HEK293T (cell line): ENCODE measurements at regions of chr12 and their contacts with region 1.

Region 1: DNA sequence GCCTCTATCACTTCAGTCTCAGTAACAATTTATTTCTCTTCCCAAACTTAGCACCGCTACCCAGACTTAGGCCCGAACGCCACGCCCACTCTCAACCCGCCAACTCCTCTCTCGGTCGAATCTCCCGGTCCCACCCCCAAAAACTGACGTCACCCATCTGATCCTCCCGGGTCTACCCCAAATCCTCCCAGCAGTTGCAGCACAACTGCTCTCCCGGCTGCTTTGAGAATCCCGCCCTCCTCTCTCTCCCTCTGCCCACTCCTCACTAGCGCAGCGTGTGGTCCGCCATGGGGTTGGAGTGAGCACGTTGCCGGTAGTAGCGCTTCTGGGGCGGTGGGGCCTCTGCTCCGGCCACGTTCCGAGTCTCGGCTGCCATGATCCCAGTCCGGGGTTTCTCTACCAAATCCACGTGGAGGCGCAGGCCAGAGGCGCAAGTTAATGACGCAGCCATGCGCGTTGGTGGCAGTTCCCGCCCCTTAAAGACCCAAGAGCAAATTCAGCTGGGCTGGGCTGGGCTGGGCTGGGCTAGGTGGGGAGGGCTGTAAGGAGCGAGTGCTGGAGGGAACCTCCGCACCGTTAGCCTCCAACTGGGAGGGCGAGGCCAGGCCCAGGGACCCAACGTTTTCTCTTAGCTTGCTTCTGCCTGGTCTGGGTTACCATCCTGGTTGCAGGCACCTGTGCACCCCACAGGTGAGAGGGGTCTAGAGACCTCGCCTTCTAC is at the start of gene METTL1:
- DNase-seq: peak; percentile 90

Region 2: GRCh38 chr12:57661376-57661775 is 110.5 kb before region 1 on chr12:
- CTCF ChIA-PET with region 1: no interaction called
- POLR2A ChIA-PET with region 1: no interaction called
- DNase-seq: no peak

Region 3: GRCh38 chr12:57751788-57752667 is 19.8 kb before region 1 on chr12 and contains the start of gene CDK4:
- CTCF ChIA-PET with region 1: interaction called, 17 read pairs
- POLR2A ChIA-PET with region 1: interaction called, 14 read pairs
- DNase-seq: peak; percentile 96

Region 4: GRCh38 chr12:57759360-57759980 is 12.4 kb before region 1 on chr12:
- CTCF ChIA-PET with region 1: interaction called, 17 read pairs
- POLR2A ChIA-PET with region 1: interaction called, 17 read pairs
- DNase-seq: no peak

Region 5: GRCh38 chr12:57782608-57783465 is 11.0 kb after region 1 on chr12 and contains the start of gene TSFM:
- CTCF ChIA-PET with region 1: interaction called, 4 read pairs
- POLR2A ChIA-PET with region 1: interaction called, 28 read pairs
- DNase-seq: peak; percentile 87

Region 6: GRCh38 chr12:57793920-57794319 is 22.1 kb after region 1 on chr12:
- CTCF ChIA-PET with region 1: no interaction called
- POLR2A ChIA-PET with region 1: interaction called, 12 read pairs
- DNase-seq: no peak